CD14-positive monocyte (primary cell): ENCODE measurements at regions of chr14 and their contacts with region 1.

Region 1: GRCh38 chr14:61837336-61838229 is 75.4 kb downstream of the SNAPC1 start:
- DNase-seq: peak; percentile 72 to 83 (median 77)
- H3K4me3 ChIP-seq: no peak overlapping the region
- H3K4me3 Mint-ChIP-seq: no peak overlapping the region
- H3K27ac ChIP-seq: no peak overlapping the region
- H3K27ac Mint-ChIP-seq: no peak overlapping the region
- H3K4me1 ChIP-seq: no peaks in the 10 kb centered on the region
- H3K4me1 Mint-ChIP-seq: no peaks in the 10 kb centered on the region
- H3K27me3 ChIP-seq: peaks cover 0 to 6% of the 10 kb centered on the region in 2 donors
- H3K27me3 Mint-ChIP-seq: peaks cover 4 to 14% (median 9%) of the 10 kb centered on the region in 3 donors
- CTCF ChIP-seq: peak; percentile 92

Region 2: GRCh38 chr14:61296719-61297502 is 540.7 kb before region 1 on chr14:
- intact Hi-C with region 1: loop called (anchors 5 to 10 kb)
- DNase-seq: peak; percentile 21 to 24 (median 24)
- H3K4me3 ChIP-seq: no peak overlapping the region
- H3K4me3 Mint-ChIP-seq: no peak overlapping the region
- H3K27ac ChIP-seq: no peak overlapping the region
- H3K27ac Mint-ChIP-seq: no peak overlapping the region
- H3K4me1 ChIP-seq: no peaks in the 10 kb centered on the region
- H3K4me1 Mint-ChIP-seq: no peaks in the 10 kb centered on the region
- H3K27me3 ChIP-seq: no peaks in the 10 kb centered on the region
- H3K27me3 Mint-ChIP-seq: peaks cover 2 to 6% (median 3%) of the 10 kb centered on the region in 3 donors
- CTCF ChIP-seq: peak; percentile 79

Region 3: GRCh38 chr14:61456720-61457119 is 380.9 kb before region 1 on chr14:
- intact Hi-C with region 1: loop called in 1 of 2 experiments (anchors 2 kb)
- DNase-seq: peak; percentile 72 to 78 (median 75)
- H3K4me3 ChIP-seq: no peak overlapping the region
- H3K4me3 Mint-ChIP-seq: no peak overlapping the region
- H3K27ac ChIP-seq: no peak overlapping the region
- H3K27ac Mint-ChIP-seq: peak overlapping the region in 1 of 7 donors; percentile 22
- H3K4me1 ChIP-seq: no peaks in the 10 kb centered on the region
- H3K4me1 Mint-ChIP-seq: peaks cover 3% of the 10 kb centered on the region
- H3K27me3 ChIP-seq: no peaks in the 10 kb centered on the region
- H3K27me3 Mint-ChIP-seq: no peaks in the 10 kb centered on the region
- CTCF ChIP-seq: peak; percentile 91

Region 4: GRCh38 chr14:61461808-61462275 is 375.7 kb before region 1 on chr14:
- intact Hi-C with region 1: loop called (anchors 2 kb)
- DNase-seq: peak; percentile 55 to 79 (median 66)
- H3K4me3 ChIP-seq: no peak overlapping the region
- H3K4me3 Mint-ChIP-seq: no peak overlapping the region
- H3K27ac ChIP-seq: no peak overlapping the region
- H3K27ac Mint-ChIP-seq: peak overlapping the region in 3 of 7 donors; percentile 16 to 40 (median 34)
- H3K4me1 ChIP-seq: peaks cover under 1% of the 10 kb centered on the region in 2 donors
- H3K4me1 Mint-ChIP-seq: peaks cover 9% of the 10 kb centered on the region
- H3K27me3 ChIP-seq: no peaks in the 10 kb centered on the region
- H3K27me3 Mint-ChIP-seq: peaks cover 0 to 2% (median 0%) of the 10 kb centered on the region in 3 donors
- CTCF ChIP-seq: peak; percentile 84